ENCODE measurements at regions of chr16 and their contacts with region 1.

Region 1: GRCh38 chr16:106623-107324 is 28.7 kb downstream of the MPG start:
- DNase-seq: no peak
- ATAC-seq: peak; percentile 94
- H3K4me3 ChIP-seq: no peak overlapping the region
- H3K27ac ChIP-seq: no peak overlapping the region
- H3K4me1 ChIP-seq: no peaks in the 10 kb centered on the region
- H3K27me3 ChIP-seq: no peaks in the 10 kb centered on the region
- CTCF ChIP-seq: peak; percentile 69 to 84 (median 83)
- EP300 ChIP-seq: no peak
- POLR2A ChIP-seq: no peak
- RAD21 ChIP-seq: peak; percentile 81

Region 2: GRCh38 chr16:84718-85406 is 21.9 kb before region 1 on chr16:
- CTCF ChIA-PET with region 1: interaction called, 12 read pairs
- POLR2A ChIA-PET with region 1: no interaction called
- RAD21 ChIA-PET with region 1: no interaction called
- SMC1A ChIA-PET with region 1: no interaction called
- in situ Hi-C with region 1: no loop called
- intact Hi-C with region 1: no loop called
- DNase-seq: peak; percentile 65
- ATAC-seq: peak; percentile 90
- H3K4me3 ChIP-seq: no peak overlapping the region
- H3K27ac ChIP-seq: peak overlapping the region; percentile 54
- H3K4me1 ChIP-seq: peaks cover 17% of the 10 kb centered on the region
- H3K27me3 ChIP-seq: no peaks in the 10 kb centered on the region
- CTCF ChIP-seq: no peak
- EP300 ChIP-seq: peak in 1 of 2 experiments; percentile 48; a peak in 1 of 4 replicates
- POLR2A ChIP-seq: peak; percentile 65
- RAD21 ChIP-seq: no peak

Region 3: GRCh38 chr16:117379-118365 is 10.9 kb after region 1 on chr16:
- CTCF ChIA-PET with region 1: interaction called, 37 read pairs
- POLR2A ChIA-PET with region 1: interaction called, 3 read pairs
- RAD21 ChIA-PET with region 1: no interaction called
- SMC1A ChIA-PET with region 1: no interaction called
- in situ Hi-C with region 1: no loop called
- intact Hi-C with region 1: no loop called
- DNase-seq: no peak
- ATAC-seq: peak; percentile 95
- H3K4me3 ChIP-seq: no peak overlapping the region
- H3K27ac ChIP-seq: no peak overlapping the region
- H3K4me1 ChIP-seq: no peaks in the 10 kb centered on the region
- H3K27me3 ChIP-seq: no peaks in the 10 kb centered on the region
- CTCF ChIP-seq: peak; percentile 69 to 78 (median 71)
- EP300 ChIP-seq: no peak
- POLR2A ChIP-seq: no peak
- RAD21 ChIP-seq: peak; percentile 45

Region 4: GRCh38 chr16:180938-181667 is 74.3 kb after region 1 on chr16:
- CTCF ChIA-PET with region 1: interaction called, 20 read pairs
- POLR2A ChIA-PET with region 1: no interaction called
- RAD21 ChIA-PET with region 1: interaction called, 7 read pairs
- SMC1A ChIA-PET with region 1: no interaction called
- in situ Hi-C with region 1: loop called (anchors 5 kb)
- intact Hi-C with region 1: loop called (anchors 2 kb)
- DNase-seq: peak; percentile 7
- ATAC-seq: peak; percentile 93
- H3K4me3 ChIP-seq: no peak overlapping the region
- H3K27ac ChIP-seq: no peak overlapping the region
- H3K4me1 ChIP-seq: peaks cover 8% of the 10 kb centered on the region; the same call in 1 of the 2 replicates
- H3K27me3 ChIP-seq: peaks cover 2 to 5% of the 10 kb centered on the region in 2 experiments; a peak in 3 of 4 replicates
- CTCF ChIP-seq: peak; percentile 87 to 97 (median 97)
- EP300 ChIP-seq: no peak
- POLR2A ChIP-seq: peak; percentile 75
- RAD21 ChIP-seq: peak; percentile 53

Region 5: GRCh38 chr16:314795-315299 is 208.1 kb after region 1 on chr16:
- CTCF ChIA-PET with region 1: no interaction called
- POLR2A ChIA-PET with region 1: no interaction called
- RAD21 ChIA-PET with region 1: no interaction called
- SMC1A ChIA-PET with region 1: no interaction called
- in situ Hi-C with region 1: no loop called
- intact Hi-C with region 1: no loop called
- DNase-seq: no peak
- ATAC-seq: no peak
- H3K4me3 ChIP-seq: no peak overlapping the region
- H3K27ac ChIP-seq: no peak overlapping the region
- H3K4me1 ChIP-seq: no peaks in the 10 kb centered on the region
- H3K27me3 ChIP-seq: no peaks in the 10 kb centered on the region
- CTCF ChIP-seq: no peak
- EP300 ChIP-seq: no peak
- POLR2A ChIP-seq: no peak
- RAD21 ChIP-seq: no peak

Region 6: DNA sequence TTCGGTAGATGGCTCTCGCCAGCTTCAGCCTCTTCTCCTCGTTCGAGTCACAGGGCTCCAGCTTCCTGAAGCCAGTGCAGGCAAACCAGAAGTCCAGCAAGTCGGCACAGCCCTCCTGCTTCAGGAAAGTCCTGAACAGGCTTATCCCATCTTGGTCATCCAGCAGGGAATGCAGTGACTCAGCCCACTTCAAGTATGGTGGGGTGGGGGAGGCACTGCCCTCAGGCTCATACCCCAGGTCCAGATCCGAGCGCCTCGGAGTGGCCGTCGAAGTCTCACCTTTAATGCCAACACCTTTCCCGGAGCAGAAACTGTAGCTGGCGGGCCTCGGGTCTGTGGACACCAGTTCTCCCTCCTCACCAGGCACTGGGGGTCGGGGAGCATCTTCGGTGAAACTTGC is 239.8 kb after region 1 on chr16:
- CTCF ChIA-PET with region 1: interaction called, 14 read pairs
- POLR2A ChIA-PET with region 1: no interaction called
- RAD21 ChIA-PET with region 1: interaction called, 6 read pairs
- SMC1A ChIA-PET with region 1: interaction called, 5 read pairs
- in situ Hi-C with region 1: no loop called
- intact Hi-C with region 1: no loop called
- DNase-seq: no peak
- ATAC-seq: no peak
- H3K4me3 ChIP-seq: no peak overlapping the region
- H3K27ac ChIP-seq: no peak overlapping the region
- H3K4me1 ChIP-seq: peaks cover 21% of the 10 kb centered on the region
- H3K27me3 ChIP-seq: no peaks in the 10 kb centered on the region
- CTCF ChIP-seq: no peak
- EP300 ChIP-seq: no peak
- POLR2A ChIP-seq: no peak
- RAD21 ChIP-seq: no peak

Region 7: DNA sequence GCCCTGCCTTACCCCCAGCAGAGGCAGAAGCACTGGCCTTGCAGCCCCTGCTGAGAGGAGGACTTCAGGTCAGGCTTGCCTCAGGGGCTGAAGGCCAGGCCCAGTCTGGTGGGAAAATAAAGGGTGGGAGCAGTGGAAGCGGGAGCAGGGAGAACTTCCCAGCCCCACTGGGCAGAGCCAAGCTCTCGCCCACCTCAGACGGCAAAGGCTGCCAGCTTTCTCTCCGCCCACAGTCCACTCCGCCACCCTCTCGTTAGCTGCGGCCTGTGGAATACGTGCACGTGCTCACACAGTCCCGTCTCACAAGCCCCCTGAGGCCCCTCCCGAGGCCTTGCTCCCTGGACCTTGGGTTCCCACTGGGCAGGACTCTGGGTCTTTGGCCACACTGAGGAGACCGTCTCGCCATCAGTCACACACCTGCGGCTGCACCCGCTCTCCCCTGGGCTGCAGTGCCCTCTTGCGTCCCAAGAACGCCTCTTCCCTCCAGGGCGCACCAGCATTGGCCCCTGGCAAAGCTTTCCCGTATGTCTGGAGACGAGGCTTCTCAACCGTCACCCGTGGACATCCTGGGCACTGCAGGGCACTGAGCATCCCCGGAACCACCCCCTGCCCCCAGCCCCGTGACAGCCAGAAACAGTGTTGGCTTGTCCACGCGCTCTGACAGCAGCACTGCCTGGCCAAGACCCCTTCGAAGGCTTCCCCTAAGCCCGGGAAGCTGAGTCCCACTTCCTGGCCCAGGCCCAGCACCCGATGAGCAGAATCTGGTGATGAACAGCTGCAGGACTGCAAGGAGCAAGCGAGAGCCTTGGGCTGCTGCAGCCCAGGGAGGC is 255.3 kb after region 1 on chr16:
- CTCF ChIA-PET with region 1: interaction called, 29 read pairs
- POLR2A ChIA-PET with region 1: no interaction called
- RAD21 ChIA-PET with region 1: interaction called, 19 read pairs
- SMC1A ChIA-PET with region 1: interaction called, 8 read pairs
- in situ Hi-C with region 1: loop called (anchors 5 kb)
- intact Hi-C with region 1: loop called (anchors 2 kb)
- DNase-seq: no peak
- ATAC-seq: peak; percentile 92
- H3K4me3 ChIP-seq: no peak overlapping the region
- H3K27ac ChIP-seq: no peak overlapping the region
- H3K4me1 ChIP-seq: no peaks in the 10 kb centered on the region
- H3K27me3 ChIP-seq: no peaks in the 10 kb centered on the region
- CTCF ChIP-seq: peak; percentile 70 to 84 (median 79)
- EP300 ChIP-seq: no peak
- POLR2A ChIP-seq: no peak
- RAD21 ChIP-seq: peak; percentile 86

Region 8: DNA sequence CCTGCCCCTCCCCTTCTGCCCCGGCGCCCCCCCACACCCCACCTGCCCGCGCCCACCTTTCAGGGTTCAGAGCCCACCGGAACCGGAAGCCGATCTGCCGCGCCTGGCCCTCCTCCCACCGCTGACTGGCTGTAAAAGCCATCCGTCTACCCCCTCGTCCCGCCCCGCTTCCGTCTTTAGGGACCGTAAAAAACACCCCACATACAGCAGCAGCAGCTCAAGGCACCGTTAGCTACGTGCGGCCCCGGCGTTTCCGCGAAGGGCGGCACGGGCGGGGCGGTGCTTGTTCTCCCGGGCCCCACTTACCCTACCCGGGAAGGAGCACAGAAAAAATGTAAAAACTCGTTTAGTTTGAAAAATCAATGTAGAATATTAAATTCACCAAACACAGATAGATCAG is 263.7 kb after region 1 on chr16 and contains the start of gene MRPL28:
- CTCF ChIA-PET with region 1: interaction called, 5 read pairs
- POLR2A ChIA-PET with region 1: no interaction called
- RAD21 ChIA-PET with region 1: interaction called, 6 read pairs
- SMC1A ChIA-PET with region 1: no interaction called
- in situ Hi-C with region 1: loop called (anchors 5 kb)
- intact Hi-C with region 1: no loop called
- DNase-seq: peak; percentile 87
- ATAC-seq: peak; percentile 99
- H3K4me3 ChIP-seq: peak within 1 kb of the TSS; percentile 65
- H3K27ac ChIP-seq: peak within 1 kb of the TSS; percentile 61
- H3K4me1 ChIP-seq: peaks cover 4% of the 10 kb centered on the region; the same call in 1 of the 2 replicates
- H3K27me3 ChIP-seq: no peaks in the 10 kb centered on the region
- CTCF ChIP-seq: no peak
- EP300 ChIP-seq: no peak
- POLR2A ChIP-seq: peak; percentile 44
- RAD21 ChIP-seq: no peak
- polyA plus RNA-seq, gene MRPL28: 1.6 to 17.9 TPM

Measured in GM12878 (cell line).